ENCODE measurements at regions of chr4 and their contacts with region 1.

Region 1: DNA sequence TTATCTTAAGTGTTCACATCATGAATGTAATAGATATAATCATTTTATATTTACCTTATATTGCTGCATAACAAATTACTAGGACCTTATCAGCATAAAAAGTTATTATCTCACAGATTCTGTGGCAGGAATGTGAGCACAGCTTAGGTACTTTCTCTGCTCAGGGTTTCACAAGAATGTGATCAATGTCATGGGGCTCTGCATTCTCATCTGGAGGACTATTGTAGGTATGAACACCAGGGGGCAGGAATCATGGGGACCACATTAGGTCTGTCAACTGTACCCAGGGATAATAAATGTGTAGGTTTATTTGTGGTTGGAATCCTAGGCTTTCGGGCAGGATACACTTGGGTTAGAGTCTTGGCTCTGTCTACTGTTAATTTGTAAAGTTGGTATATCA is 519.2 kb downstream of the ARAP2 start:
- DNase-seq: no peak
- H3K4me3 Mint-ChIP-seq: no peak overlapping the region
- H3K27ac Mint-ChIP-seq: no peak overlapping the region
- H3K4me1 Mint-ChIP-seq: no peaks in the 10 kb centered on the region
- H3K27me3 Mint-ChIP-seq: no peaks in the 10 kb centered on the region

Region 2: GRCh38 chr4:35934320-35934981 is 209.3 kb after region 1 on chr4:
- CTCF ChIA-PET with region 1: no interaction called
- intact Hi-C with region 1: loop called (anchors 10 kb)
- DNase-seq: no peak
- H3K4me3 Mint-ChIP-seq: no peak overlapping the region
- H3K27ac Mint-ChIP-seq: no peak overlapping the region
- H3K4me1 Mint-ChIP-seq: no peaks in the 10 kb centered on the region
- H3K27me3 Mint-ChIP-seq: no peaks in the 10 kb centered on the region